Psoas muscle (tissue), 8 donors: ENCODE measurements at regions of chr16 and their contacts with region 1.

Region 1: DNA sequence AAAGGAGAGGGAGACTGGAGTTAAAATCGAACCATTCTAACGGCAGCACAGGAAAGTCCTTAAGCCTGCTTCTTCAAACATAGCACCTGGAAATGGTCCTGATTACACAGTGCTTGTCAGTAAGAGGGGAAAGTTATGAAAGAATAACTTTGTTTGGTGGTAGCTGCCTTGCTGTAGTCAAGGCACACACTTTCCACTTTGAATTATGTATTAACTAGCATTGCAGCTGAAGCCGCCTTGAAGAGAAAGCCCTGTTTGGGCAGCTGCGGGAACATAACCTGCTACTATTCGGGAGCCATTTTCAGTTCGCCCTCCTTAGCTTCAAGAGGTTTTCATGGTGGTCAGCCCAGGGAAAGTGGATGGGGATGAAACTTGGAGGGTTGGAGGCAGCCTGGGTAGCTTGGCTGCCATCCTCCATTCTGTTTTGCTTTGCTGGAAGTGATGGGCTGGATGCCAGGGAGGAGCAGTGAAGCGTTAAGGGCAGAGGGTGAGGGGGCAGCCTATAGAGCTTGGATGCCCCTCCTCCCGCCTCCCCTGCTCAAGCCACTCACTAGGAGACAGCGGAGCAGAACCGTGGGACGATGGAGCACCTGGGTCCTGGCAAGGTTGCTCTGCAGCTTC is 5.3 kb upstream of the HAS3 start:
- DNase-seq: no peak
- ATAC-seq: no peak
- H3K4me3 ChIP-seq: no peak overlapping the region
- H3K27ac ChIP-seq: no peak overlapping the region
- H3K4me1 ChIP-seq: no peaks in the 10 kb centered on the region
- H3K27me3 ChIP-seq: peaks cover 0 to 8% (median 0%) of the 10 kb centered on the region in 3 donors
- CTCF ChIP-seq: no peak

Region 2: DNA sequence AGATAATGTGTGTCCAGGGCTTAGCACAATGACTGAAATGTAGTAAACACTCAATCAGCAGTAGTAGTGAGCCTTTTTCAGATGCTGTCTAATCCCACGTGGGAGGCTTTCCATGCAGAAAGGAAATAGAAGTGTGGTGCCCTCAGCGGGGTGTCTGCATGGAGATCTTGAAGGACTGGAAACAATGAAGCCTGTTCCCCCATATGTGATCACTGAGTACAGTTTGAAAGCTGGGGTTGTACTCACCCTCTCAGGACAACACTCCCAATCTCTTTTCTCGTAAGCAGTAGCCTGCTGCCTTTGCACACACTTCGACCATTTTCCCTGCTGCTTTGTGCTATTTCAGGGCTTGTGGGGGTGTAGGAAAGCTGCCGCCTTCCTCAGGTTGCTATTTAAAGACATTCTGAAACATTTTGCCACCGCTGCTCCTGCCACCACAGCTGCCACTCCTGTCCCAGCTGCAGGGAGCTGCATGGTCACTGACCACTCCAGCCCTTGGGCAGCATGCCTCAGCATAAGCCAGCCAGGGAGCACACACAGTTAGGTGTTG is 35.3 kb before region 1 on chr16:
- intact Hi-C with region 1: loop called in 1 of 2 experiments (anchors 5 kb)
- DNase-seq: peak; percentile 38 to 81
- ATAC-seq: peak; percentile 87 to 91 (median 89)
- H3K4me3 ChIP-seq: peak overlapping the region; percentile 27
- H3K27ac ChIP-seq: peak overlapping the region; percentile 82
- H3K4me1 ChIP-seq: peaks cover 25% of the 10 kb centered on the region
- H3K27me3 ChIP-seq: no peaks in the 10 kb centered on the region
- CTCF ChIP-seq: no peak

Region 3: DNA sequence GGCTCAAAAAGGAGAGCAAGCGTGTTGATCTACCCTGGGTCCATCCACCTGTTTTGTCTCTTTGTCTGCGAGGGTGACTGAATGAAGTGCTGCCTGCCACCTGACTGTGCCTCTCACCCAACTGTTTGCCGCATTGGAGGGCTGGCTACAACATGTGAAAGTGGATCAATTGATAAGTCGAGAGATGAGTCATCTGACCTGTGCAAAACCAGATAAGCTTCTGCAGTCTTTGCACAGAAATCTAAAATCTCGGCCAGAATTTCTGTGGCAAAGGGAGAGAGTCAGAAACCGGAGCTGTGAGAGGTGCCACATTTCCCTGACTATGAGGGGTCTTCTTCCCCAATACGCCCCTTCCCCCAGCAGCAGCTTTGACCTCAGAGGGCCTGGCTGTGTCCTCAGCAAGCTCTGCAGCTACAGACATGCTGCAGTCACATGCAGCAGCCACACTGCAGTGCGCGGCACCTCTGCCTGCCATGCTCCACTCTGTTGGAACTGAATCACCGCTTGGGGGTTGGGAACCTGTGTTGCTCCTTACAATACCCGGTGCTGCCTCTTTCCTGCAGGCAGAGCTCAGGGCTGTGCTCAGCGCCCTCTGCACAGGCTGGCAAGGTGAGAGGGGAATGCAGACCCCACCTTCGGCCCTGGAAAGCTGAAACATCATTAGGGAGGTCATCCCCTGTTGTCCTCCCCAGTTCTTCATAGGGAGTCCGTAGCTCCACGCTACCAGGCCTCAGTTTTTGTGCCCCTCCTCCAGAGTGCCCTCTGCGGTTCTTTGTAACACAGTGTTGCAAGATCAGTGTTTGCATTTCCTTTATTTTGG is 10.9 kb before region 1 on chr16:
- intact Hi-C with region 1: no loop called
- DNase-seq: no peak
- ATAC-seq: peak in 2 of 4 donors; percentile 34 to 54
- H3K4me3 ChIP-seq: no peak overlapping the region
- H3K27ac ChIP-seq: no peak overlapping the region
- H3K4me1 ChIP-seq: peaks cover 3% of the 10 kb centered on the region
- H3K27me3 ChIP-seq: no peaks in the 10 kb centered on the region
- CTCF ChIP-seq: no peak

Region 4: GRCh38 chr16:69150146-69150865 is 50.1 kb after region 1 on chr16:
- intact Hi-C with region 1: no loop called
- DNase-seq: no peak
- ATAC-seq: peak; percentile 53 to 81 (median 76)
- H3K4me3 ChIP-seq: no peak overlapping the region
- H3K27ac ChIP-seq: no peak overlapping the region
- H3K4me1 ChIP-seq: no peaks in the 10 kb centered on the region
- H3K27me3 ChIP-seq: no peaks in the 10 kb centered on the region
- CTCF ChIP-seq: peak; percentile 79